Panc1 (cell line): ENCODE measurements at regions of chr17 and their contacts with region 1.

Region 1: GRCh38 chr17:49851387-49852291 is 3.8 kb upstream of the TAC4 start:
- DNase-seq: no peak
- ATAC-seq: peak; percentile 78
- H3K4me3 ChIP-seq: peak overlapping the region; percentile 48 to 59
- H3K27ac ChIP-seq: no peak overlapping the region
- H3K4me1 ChIP-seq: peaks cover 3% of the 10 kb centered on the region; the same call in 1 of the 2 replicates
- H3K27me3 ChIP-seq: peaks cover 23% of the 10 kb centered on the region
- CTCF ChIP-seq: peak; percentile 90

Region 2: GRCh38 chr17:49575579-49576087 is 276.0 kb before region 1 on chr17 and contains the start of gene NXPH3:
- CTCF ChIA-PET with region 1: no interaction called
- POLR2A ChIA-PET with region 1: no interaction called
- in situ Hi-C with region 1: no loop called
- intact Hi-C with region 1: loop called (anchors 10 kb)
- DNase-seq: no peak
- ATAC-seq: peak; percentile 83
- H3K4me3 ChIP-seq: peak within 1 kb of the TSS; percentile 50 to 69
- H3K27ac ChIP-seq: no peak within 1 kb of the TSS
- H3K4me1 ChIP-seq: peaks cover 11% of the 10 kb centered on the region
- H3K27me3 ChIP-seq: no peaks in the 10 kb centered on the region
- CTCF ChIP-seq: peak; percentile 96
- total RNA-seq, gene NXPH3: 0.57 TPM